ENCODE measurements at regions of chr15 and their contacts with region 1.

Region 1: DNA sequence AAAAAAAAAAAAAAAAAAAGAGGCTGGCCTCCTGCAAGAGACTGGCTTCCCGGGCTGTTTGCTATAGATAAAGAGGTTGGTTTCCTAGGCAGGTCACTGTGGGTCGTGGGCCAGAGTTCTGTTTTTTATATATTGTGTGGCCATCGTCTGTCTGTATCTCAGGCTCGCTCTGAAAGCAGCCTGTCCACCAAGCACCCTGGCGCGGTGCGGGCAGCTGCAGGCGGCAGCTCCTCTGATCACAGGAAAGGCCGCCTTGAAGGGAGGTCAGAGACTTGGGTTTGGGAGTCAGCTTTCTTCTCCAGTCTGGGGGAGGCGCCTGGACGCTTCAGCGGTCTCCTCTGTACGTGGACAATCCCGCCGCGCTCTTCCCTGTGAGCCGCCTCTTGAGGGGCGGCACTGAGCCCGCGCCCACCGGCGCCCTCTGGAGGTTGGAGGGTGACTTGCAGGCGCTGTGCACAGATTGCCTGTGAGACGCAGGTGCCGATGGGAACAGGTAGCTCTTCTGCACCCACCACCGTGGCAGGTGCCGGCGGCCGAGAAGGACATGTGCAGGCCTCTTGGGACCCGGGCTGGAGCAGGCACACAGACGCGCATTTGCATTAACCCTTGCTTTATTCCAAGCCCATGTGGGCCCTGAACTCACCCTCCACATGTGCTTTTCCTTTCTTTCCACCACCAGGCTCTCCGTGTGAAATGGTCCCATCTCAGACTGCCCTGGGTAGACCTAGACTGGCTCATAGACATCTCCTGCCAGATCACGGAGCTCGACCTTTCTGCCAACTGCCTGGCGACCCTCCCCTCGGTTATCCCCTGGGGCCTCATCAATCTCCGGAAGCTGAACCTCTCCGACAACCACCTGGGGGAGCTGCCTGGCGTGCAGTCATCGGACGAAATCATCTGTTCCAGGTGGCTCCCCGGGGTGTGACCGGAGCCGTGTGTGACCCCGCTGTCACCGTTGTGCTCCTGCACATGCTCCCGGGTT is 89.3 kb downstream of the LRRK1 start:
- ATAC-seq: peak; percentile 43 to 85 (median 77)
- H3K4me3 ChIP-seq: peak overlapping the region in 4 of 5 donors; percentile 11 to 43 (median 29)
- H3K27ac ChIP-seq: no peak overlapping the region
- H3K4me1 ChIP-seq: no peaks in the 10 kb centered on the region

Region 2: DNA sequence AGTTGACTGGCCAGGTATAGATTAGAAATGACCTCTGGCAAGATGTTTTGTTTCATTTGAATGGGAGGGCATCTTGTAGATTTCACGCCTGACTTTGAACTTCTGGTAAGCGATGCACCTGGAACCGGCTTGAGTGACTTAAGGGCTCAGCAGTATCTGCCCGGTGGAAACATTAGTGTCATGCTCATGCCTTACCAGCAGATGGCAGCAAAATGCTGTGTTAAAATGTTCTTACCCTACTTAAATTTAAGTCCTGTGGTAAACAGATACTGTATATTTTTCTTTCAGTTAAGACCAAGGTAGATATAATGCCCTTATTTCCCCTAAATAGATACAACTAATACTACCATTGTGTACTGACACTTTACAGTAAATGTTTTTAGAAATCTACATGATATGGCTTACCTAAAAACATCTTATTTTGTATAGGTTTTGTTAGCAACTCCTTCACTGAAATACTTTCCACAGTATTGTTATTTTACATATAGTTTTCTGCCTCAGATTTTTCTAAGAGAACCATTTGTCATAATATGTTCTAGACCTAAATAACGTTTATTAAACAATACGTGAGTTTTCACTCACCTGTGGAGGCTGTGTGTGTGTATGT is 380.6 kb before region 1 on chr15:
- in situ Hi-C with region 1: loop called in 3 of 9 experiments (anchors 25 kb)
- ATAC-seq: peak; percentile 59 to 83 (median 68)
- H3K4me3 ChIP-seq: no peak overlapping the region
- H3K27ac ChIP-seq: no peak overlapping the region
- H3K4me1 ChIP-seq: no peaks in the 10 kb centered on the region

Region 3: DNA sequence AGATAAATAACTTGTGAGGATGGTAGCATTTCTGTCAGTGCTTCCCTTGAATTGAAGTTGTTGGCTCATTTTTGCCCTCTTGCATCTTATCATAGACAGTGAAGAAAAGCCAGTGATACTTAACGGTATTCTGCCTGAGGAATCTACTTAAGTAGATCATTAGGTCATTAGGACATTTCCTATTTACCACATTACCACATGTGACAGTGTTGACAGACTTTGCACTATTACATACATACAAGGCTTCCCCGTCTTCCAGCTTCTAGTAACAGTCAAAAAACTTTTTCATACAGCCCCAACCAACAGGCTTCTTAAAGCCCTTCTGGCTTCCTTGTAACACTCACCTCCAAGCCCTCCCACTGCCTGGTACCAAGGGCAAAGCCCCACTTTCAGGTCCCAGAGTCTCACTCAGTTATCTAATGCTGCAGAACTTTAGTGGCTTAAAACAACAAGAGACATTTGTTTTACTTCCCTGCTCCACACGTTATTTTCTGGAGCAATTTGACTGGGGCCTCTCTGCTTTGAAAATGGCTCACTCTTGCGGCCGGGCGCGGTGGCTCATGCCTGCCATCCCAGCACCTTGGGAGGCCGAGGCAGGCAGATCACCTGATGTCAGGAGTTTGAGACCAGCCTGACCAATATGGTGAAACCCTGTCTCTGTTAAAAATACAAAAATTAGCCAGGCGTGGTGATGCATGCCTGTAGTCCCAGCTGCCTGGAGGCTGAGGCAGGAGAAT is 366.1 kb before region 1 on chr15:
- in situ Hi-C with region 1: loop called in 4 of 9 experiments (anchors 10 to 25 kb)
- ATAC-seq: no peak
- H3K4me3 ChIP-seq: no peak overlapping the region
- H3K27ac ChIP-seq: no peak overlapping the region
- H3K4me1 ChIP-seq: no peaks in the 10 kb centered on the region

Region 4: DNA sequence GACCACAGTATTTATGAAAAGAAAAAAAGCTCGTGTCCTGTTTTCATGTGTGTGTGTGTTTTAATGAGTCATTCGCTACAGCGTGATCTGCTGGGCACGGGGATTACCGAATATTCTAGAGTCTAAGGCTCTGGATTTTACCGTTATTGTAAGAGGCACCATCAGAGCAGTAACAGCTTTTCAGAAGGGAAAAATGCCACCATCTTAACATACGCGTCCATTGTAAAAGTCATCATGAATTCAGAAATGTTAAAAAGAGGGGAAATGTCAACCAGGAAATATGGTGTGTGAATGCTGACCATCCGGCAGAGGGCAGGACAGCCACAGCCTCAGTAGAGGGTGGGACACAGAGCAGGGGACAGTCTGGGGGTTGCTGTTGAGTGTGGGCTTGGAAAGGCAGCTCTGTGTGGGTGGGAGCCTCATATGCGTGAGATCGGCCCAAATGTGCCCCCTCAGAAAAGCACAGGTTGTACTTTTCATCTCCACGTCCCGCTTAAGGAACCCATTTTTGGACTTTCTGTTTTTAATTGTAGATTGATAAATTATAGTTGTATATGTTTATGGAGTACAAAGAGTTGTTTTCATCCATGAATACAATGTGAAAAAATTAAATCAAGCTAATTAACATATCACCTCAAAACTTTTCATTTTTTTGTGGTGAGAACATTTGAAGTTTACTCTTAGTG is 336.4 kb before region 1 on chr15:
- in situ Hi-C with region 1: loop called in 1 of 9 experiments (anchors 25 kb)
- ATAC-seq: peak in 4 of 8 experiments; percentile 44 to 96 (median 90)
- H3K4me3 ChIP-seq: no peak overlapping the region
- H3K27ac ChIP-seq: no peak overlapping the region
- H3K4me1 ChIP-seq: no peaks in the 10 kb centered on the region

Region 5: GRCh38 chr15:100833417-100834389 is 174.7 kb before region 1 on chr15:
- in situ Hi-C with region 1: no loop called
- ATAC-seq: no peak
- H3K4me3 ChIP-seq: no peak overlapping the region
- H3K27ac ChIP-seq: no peak overlapping the region
- H3K4me1 ChIP-seq: no peaks in the 10 kb centered on the region

Region 6: GRCh38 chr15:100918034-100918689 is 90.3 kb before region 1 on chr15:
- in situ Hi-C with region 1: loop called in 1 of 9 experiments (anchors 25 kb)
- ATAC-seq: peak; percentile 59 to 89 (median 83)
- H3K4me3 ChIP-seq: peak overlapping the region in 4 of 5 donors; percentile 33 to 40 (median 36)
- H3K27ac ChIP-seq: no peak overlapping the region
- H3K4me1 ChIP-seq: peaks cover 0 to 5% of the 10 kb centered on the region in 2 donors

Region 7: DNA sequence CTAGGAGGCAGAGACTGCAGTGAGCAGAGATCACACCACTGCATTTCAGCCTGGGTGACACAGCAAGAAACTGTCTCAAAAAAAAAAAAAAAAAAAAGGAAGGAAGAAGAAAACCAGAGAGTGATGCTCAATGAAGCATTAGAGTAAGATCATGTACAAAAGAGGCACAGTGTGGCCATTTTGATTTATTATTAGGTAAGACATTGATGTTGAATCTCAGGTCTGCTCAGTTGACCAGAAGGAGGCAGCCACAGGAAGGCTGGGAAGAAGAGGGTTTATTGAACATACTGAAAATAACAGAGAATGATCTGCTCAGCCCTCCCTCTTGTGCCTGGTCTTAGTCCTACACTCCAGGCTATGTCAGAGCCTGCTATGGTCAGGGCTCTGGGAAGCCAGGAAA is 73.7 kb before region 1 on chr15:
- in situ Hi-C with region 1: loop called in 1 of 9 experiments (anchors 10 kb)
- ATAC-seq: peak in 3 of 8 experiments; percentile 54 to 73 (median 71)
- H3K4me3 ChIP-seq: no peak overlapping the region
- H3K27ac ChIP-seq: no peak overlapping the region
- H3K4me1 ChIP-seq: no peaks in the 10 kb centered on the region

Region 8: GRCh38 chr15:101086394-101087171 is 78.1 kb after region 1 on chr15:
- in situ Hi-C with region 1: no loop called
- ATAC-seq: no peak
- H3K4me3 ChIP-seq: no peak overlapping the region
- H3K27ac ChIP-seq: no peak overlapping the region
- H3K4me1 ChIP-seq: peaks cover 10 to 22% of the 10 kb centered on the region in 2 donors